ENCODE measurements at regions of chr5 and their contacts with region 1.

Region 1: GRCh38 chr5:140632150-140633020 is 590 bp downstream of the CD14 start:
- DNase-seq: peak; percentile 84
- H3K4me3 Mint-ChIP-seq: peak overlapping the region; percentile 81
- H3K27ac Mint-ChIP-seq: peak overlapping the region; percentile 60
- H3K4me1 Mint-ChIP-seq: peaks cover 23% of the 10 kb centered on the region
- H3K27me3 Mint-ChIP-seq: peaks cover 18% of the 10 kb centered on the region

Region 2: GRCh38 chr5:140362860-140363630 is 269.3 kb before region 1 on chr5:
- intact Hi-C with region 1: loop called (anchors 2 kb)
- DNase-seq: peak; percentile 96
- H3K4me3 Mint-ChIP-seq: peak overlapping the region; percentile 85
- H3K27ac Mint-ChIP-seq: peak overlapping the region; percentile 61
- H3K4me1 Mint-ChIP-seq: peaks cover 17% of the 10 kb centered on the region
- H3K27me3 Mint-ChIP-seq: no peaks in the 10 kb centered on the region

Region 3: GRCh38 chr5:140372971-140373487 is 259.4 kb before region 1 on chr5:
- intact Hi-C with region 1: loop called (anchors 2 kb)
- DNase-seq: peak; percentile 84
- H3K4me3 Mint-ChIP-seq: no peak overlapping the region
- H3K27ac Mint-ChIP-seq: no peak overlapping the region
- H3K4me1 Mint-ChIP-seq: peaks cover 7% of the 10 kb centered on the region
- H3K27me3 Mint-ChIP-seq: no peaks in the 10 kb centered on the region

Region 4: GRCh38 chr5:140916349-140916748 is 284.0 kb after region 1 on chr5:
- intact Hi-C with region 1: no loop called
- DNase-seq: no peak
- H3K4me3 Mint-ChIP-seq: no peak overlapping the region
- H3K27ac Mint-ChIP-seq: no peak overlapping the region
- H3K4me1 Mint-ChIP-seq: no peaks in the 10 kb centered on the region
- H3K27me3 Mint-ChIP-seq: no peaks in the 10 kb centered on the region

Measured in activated CD4-positive, alpha-beta T cell treated with anti-CD3 and anti-CD28 coated beads, Interleukin-2, amount 10 ng/mL, durations not matched to agents 24 days and 14 days (primary cell).